Heart right ventricle (tissue), 16 donors: ENCODE measurements at regions of chr11 and their contacts with region 1.

Region 1: DNA sequence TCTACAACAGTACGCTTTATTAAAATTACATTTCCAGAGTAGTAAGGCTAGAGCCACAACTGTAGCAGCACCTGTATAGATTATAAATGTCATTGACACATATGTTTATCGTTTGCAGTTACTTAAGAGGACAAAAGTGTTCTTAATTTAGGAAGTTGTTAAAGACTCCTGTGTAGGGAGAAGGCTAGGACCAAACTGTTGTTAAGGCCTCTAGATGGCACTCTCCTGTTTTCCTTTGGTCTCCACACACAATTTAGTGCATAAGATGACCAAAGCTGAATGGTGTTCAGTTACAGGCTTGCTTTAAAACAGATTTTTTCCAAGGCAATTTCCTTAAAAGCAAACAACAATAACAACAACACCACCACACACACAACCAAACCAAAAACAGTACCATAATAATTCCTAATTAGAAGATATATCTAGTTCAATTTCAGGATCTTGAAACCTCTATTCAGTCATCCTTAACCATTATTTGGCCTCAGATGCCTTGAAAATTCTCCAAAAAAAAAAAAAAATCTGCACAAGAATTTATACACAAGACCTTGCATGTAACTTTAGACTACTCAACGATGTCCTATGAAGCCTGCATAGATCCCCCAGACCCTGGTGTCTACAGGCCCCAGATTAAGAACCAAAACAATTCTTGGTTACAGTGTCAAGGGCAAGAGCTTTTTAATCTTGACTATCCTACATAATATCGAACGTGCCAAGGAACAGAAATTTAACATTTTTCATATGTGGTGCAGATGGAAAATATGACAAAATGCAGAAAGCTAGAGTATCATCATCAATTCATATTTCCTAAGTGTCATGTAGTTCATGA is 42.6 kb upstream of the APOA1 start:
- DNase-seq: peak in 1 of 2 donors; percentile 48
- ATAC-seq: peak; percentile 63 to 94 (median 90)
- H3K4me3 ChIP-seq: no peak overlapping the region
- H3K27ac ChIP-seq: no peak overlapping the region
- H3K4me1 ChIP-seq: peaks cover 0 to 21% (median 3%) of the 10 kb centered on the region in 9 donors
- H3K27me3 ChIP-seq: no peaks in the 10 kb centered on the region
- CTCF ChIP-seq: peak; percentile 25 to 86 (median 72)

Region 2: DNA sequence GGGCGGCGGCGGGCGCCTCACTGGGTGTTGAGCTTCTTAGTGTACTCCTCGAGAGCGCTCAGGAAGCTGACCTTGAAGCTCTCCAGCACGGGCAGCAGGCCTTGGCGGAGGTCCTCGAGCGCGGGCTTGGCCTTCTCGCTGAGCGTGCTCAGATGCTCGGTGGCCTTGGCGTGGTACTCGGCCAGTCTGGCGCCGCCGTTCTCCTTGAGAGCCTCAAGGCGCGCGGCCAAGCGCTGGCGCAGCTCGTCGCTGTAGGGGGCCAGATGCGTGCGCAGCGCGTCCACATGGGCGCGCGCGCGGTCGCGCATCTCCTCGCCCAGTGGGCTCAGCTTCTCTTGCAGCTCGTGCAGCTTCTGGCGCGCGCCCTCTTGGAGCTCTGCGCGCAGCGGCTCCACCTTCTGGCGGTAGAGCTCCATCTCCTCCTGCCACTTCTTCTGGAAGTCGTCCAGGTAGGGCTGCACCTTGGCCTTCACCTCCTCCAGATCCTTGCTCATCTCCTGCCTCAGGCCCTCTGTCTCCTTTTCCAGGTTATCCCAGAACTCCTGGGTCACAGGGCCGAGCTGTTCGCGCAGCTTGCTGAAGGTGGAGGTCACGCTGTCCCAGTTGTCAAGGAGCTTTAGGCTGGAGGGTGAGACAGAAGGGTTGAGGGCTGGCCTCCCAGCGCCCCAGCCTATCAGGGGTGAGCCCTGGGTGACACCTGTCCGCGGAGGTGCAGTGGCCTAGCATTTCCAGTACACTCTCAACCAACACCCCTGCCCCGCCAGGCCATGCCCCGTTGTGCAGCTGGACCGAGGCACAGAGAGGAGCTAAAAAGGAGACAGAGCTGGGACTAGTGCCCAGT is 44.0 kb before region 1 on chr11:
- intact Hi-C with region 1: loop called in 1 of 10 experiments (anchors 5 kb)
- DNase-seq: peak; percentile 83 to 91
- ATAC-seq: peak; percentile 81 to 90 (median 86)
- H3K4me3 ChIP-seq: peak overlapping the region in 9 of 10 donors; percentile 3 to 57 (median 46)
- H3K27ac ChIP-seq: peak overlapping the region; percentile 36 to 88 (median 83)
- H3K4me1 ChIP-seq: peaks cover 11 to 63% (median 38%) of the 10 kb centered on the region in 9 donors
- H3K27me3 ChIP-seq: no peaks in the 10 kb centered on the region
- CTCF ChIP-seq: peak; percentile 18 to 81 (median 57)

Region 3: GRCh38 chr11:116913000-116913399 is 33.0 kb after region 1 on chr11:
- intact Hi-C with region 1: no loop called
- DNase-seq: no peak
- ATAC-seq: peak in 5 of 8 donors; percentile 44 to 67 (median 53)
- H3K4me3 ChIP-seq: no peak overlapping the region
- H3K27ac ChIP-seq: peak overlapping the region in 1 of 10 donors; percentile 67
- H3K4me1 ChIP-seq: peaks cover 0 to 47% (median 8%) of the 10 kb centered on the region in 9 donors
- H3K27me3 ChIP-seq: no peaks in the 10 kb centered on the region
- CTCF ChIP-seq: no peak

Region 4: GRCh38 chr11:116930177-116930576 is 50.2 kb after region 1 on chr11:
- intact Hi-C with region 1: loop called in 1 of 10 experiments (anchors 5 kb)
- DNase-seq: peak in 1 of 2 donors; percentile 26
- ATAC-seq: peak in 6 of 8 donors; percentile 34 to 69 (median 56)
- H3K4me3 ChIP-seq: peak overlapping the region in 8 of 10 donors; percentile 8 to 37 (median 28)
- H3K27ac ChIP-seq: peak overlapping the region in 8 of 10 donors; percentile 50 to 76 (median 64)
- H3K4me1 ChIP-seq: peaks cover 0 to 69% (median 51%) of the 10 kb centered on the region in 9 donors
- H3K27me3 ChIP-seq: no peaks in the 10 kb centered on the region
- CTCF ChIP-seq: no peak

Region 5: GRCh38 chr11:117107701-117108590 is 227.9 kb after region 1 on chr11:
- intact Hi-C with region 1: loop called in 9 of 10 experiments (anchors 1 to 5 kb)
- DNase-seq: no peak
- ATAC-seq: no peak
- H3K4me3 ChIP-seq: no peak overlapping the region
- H3K27ac ChIP-seq: peak overlapping the region in 3 of 10 donors; percentile 52 to 64 (median 56)
- H3K4me1 ChIP-seq: peaks cover 0 to 6% (median 0%) of the 10 kb centered on the region in 9 donors
- H3K27me3 ChIP-seq: no peaks in the 10 kb centered on the region
- CTCF ChIP-seq: peak in 1 of 9 donors; percentile 2